Heart left ventricle (tissue), 16 donors: ENCODE measurements at regions of chr17 and their contacts with region 1.

Region 1: GRCh38 chr17:55356434-55357328 is 65.0 kb downstream of the MMD start:
- DNase-seq: peak in 4 of 5 donors; percentile 39 to 70 (median 53)
- ATAC-seq: peak in 3 of 4 donors; percentile 68 to 85 (median 75)
- H3K4me3 ChIP-seq: no peak overlapping the region
- H3K27ac ChIP-seq: no peak overlapping the region
- H3K4me1 ChIP-seq: no peaks in the 10 kb centered on the region
- H3K27me3 ChIP-seq: no peaks in the 10 kb centered on the region
- CTCF ChIP-seq: peak; percentile 67 to 84 (median 76)
- POLR2A ChIP-seq: no peak

Region 2: GRCh38 chr17:55053855-55054254 is 302.8 kb before region 1 on chr17:
- intact Hi-C with region 1: loop called in 3 of 10 experiments (anchors 5 to 10 kb)
- DNase-seq: no peak
- ATAC-seq: no peak
- H3K4me3 ChIP-seq: no peak overlapping the region
- H3K27ac ChIP-seq: no peak overlapping the region
- H3K4me1 ChIP-seq: no peaks in the 10 kb centered on the region
- H3K27me3 ChIP-seq: no peaks in the 10 kb centered on the region
- CTCF ChIP-seq: peak in 11 of 12 donors; percentile 11 to 54 (median 25)
- POLR2A ChIP-seq: no peak